GM12878 (cell line): ENCODE measurements at regions of chrX and their contacts with region 1.

Region 1: DNA sequence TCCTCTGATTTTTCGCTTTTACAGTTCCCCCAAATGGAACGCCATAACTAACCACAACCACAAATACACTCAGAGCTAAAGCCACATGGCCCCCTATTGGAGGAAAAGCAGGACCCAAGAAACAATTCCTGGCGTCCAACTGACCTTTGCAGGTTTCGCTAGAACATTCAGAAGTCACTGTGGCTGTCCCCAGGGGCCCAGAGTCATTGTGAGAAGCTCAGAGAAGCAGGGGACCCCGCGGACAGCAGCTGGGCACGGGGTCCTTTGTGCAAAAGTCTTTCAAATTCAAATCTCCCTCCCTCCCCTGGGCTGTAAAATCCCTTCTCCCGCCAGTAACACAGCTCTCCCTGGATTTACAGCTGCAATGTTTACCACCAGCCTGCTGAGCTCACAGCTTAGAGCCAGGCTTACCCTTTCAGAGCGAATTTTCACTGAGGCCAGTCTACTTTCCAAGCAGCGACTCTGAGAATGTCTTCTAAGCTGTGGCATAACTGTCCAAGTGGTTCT is 214.8 kb downstream of the CRLF2 start:
- DNase-seq: peak; percentile 40
- ATAC-seq: peak; percentile 71
- H3K4me3 ChIP-seq: no peak overlapping the region
- H3K27ac ChIP-seq: peak overlapping the region; percentile 37; the same call in 1 of the 2 replicates
- H3K4me1 ChIP-seq: peaks cover 9% of the 10 kb centered on the region; the same call in 1 of the 2 replicates
- H3K27me3 ChIP-seq: no peaks in the 10 kb centered on the region
- CTCF ChIP-seq: no peak
- EP300 ChIP-seq: no peak
- POLR2A ChIP-seq: no peak
- RAD21 ChIP-seq: peak; percentile 41

Region 2: GRCh38 chrX:915427-916229 is 82.1 kb before region 1 on chrX:
- CTCF ChIA-PET with region 1: no interaction called
- POLR2A ChIA-PET with region 1: no interaction called
- RAD21 ChIA-PET with region 1: no interaction called
- SMC1A ChIA-PET with region 1: no interaction called
- in situ Hi-C with region 1: no loop called
- intact Hi-C with region 1: no loop called
- DNase-seq: no peak
- ATAC-seq: no peak
- H3K4me3 ChIP-seq: no peak overlapping the region
- H3K27ac ChIP-seq: no peak overlapping the region
- H3K4me1 ChIP-seq: no peaks in the 10 kb centered on the region
- H3K27me3 ChIP-seq: no peaks in the 10 kb centered on the region
- CTCF ChIP-seq: no peak
- EP300 ChIP-seq: no peak
- POLR2A ChIP-seq: no peak
- RAD21 ChIP-seq: no peak

Region 3: GRCh38 chrX:981721-982626 is 15.7 kb before region 1 on chrX:
- CTCF ChIA-PET with region 1: no interaction called
- POLR2A ChIA-PET with region 1: no interaction called
- RAD21 ChIA-PET with region 1: no interaction called
- SMC1A ChIA-PET with region 1: no interaction called
- in situ Hi-C with region 1: no loop called
- intact Hi-C with region 1: no loop called
- DNase-seq: no peak
- ATAC-seq: no peak
- H3K4me3 ChIP-seq: no peak overlapping the region
- H3K27ac ChIP-seq: no peak overlapping the region
- H3K4me1 ChIP-seq: no peaks in the 10 kb centered on the region
- H3K27me3 ChIP-seq: no peaks in the 10 kb centered on the region
- CTCF ChIP-seq: no peak
- EP300 ChIP-seq: no peak
- POLR2A ChIP-seq: no peak
- RAD21 ChIP-seq: no peak

Region 4: DNA sequence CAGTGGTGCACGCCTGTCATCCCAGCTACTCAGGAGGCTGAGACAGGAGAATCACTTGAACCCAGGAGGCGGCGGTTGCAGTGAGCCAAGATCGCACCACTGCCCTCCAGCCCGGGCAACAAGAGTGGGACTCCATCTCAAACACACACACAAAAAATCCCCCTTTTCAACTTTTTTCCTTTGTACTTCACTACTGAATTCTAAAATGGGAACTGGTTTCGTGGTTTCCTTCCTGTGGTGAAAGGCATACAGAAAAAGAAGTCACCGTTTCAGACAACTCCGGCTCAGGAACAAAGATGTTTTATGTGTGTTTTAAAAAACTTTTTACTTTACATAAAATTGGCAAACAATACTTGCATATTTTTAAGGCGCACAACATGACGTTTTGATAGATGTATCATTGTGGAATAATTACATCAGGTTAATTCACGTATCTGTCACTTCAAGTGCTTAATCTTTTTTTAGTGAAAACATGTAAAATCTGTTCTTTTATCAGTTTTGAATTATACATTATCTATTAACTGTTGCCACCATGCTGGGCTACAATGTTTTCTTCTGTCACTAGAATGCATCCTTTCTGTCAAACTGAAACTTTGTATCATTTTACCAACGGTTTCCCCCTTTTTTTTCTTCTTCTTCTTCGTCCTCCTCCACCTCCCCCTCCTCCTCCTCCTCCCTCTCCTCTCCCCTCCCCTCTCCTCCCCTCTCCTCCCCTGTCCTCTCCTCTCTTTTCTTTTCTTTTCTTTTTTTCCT is 28.8 kb after region 1 on chrX:
- CTCF ChIA-PET with region 1: no interaction called
- POLR2A ChIA-PET with region 1: no interaction called
- RAD21 ChIA-PET with region 1: no interaction called
- SMC1A ChIA-PET with region 1: no interaction called
- in situ Hi-C with region 1: loop called (anchors 5 kb)
- intact Hi-C with region 1: loop called (anchors 2 kb)
- DNase-seq: peak; percentile 63
- ATAC-seq: peak; percentile 81
- H3K4me3 ChIP-seq: 0 out of 2 replicates have a peak overlapping the region, but pooled peaks have one; percentile 22
- H3K27ac ChIP-seq: peak overlapping the region; percentile 86
- H3K4me1 ChIP-seq: peaks cover 10% of the 10 kb centered on the region
- H3K27me3 ChIP-seq: no peaks in the 10 kb centered on the region
- CTCF ChIP-seq: no peak
- EP300 ChIP-seq: no peak; a peak in 1 of 4 replicates
- POLR2A ChIP-seq: no peak
- RAD21 ChIP-seq: no peak